ENCODE measurements at regions of chr3 and their contacts with region 1.

Region 1: DNA sequence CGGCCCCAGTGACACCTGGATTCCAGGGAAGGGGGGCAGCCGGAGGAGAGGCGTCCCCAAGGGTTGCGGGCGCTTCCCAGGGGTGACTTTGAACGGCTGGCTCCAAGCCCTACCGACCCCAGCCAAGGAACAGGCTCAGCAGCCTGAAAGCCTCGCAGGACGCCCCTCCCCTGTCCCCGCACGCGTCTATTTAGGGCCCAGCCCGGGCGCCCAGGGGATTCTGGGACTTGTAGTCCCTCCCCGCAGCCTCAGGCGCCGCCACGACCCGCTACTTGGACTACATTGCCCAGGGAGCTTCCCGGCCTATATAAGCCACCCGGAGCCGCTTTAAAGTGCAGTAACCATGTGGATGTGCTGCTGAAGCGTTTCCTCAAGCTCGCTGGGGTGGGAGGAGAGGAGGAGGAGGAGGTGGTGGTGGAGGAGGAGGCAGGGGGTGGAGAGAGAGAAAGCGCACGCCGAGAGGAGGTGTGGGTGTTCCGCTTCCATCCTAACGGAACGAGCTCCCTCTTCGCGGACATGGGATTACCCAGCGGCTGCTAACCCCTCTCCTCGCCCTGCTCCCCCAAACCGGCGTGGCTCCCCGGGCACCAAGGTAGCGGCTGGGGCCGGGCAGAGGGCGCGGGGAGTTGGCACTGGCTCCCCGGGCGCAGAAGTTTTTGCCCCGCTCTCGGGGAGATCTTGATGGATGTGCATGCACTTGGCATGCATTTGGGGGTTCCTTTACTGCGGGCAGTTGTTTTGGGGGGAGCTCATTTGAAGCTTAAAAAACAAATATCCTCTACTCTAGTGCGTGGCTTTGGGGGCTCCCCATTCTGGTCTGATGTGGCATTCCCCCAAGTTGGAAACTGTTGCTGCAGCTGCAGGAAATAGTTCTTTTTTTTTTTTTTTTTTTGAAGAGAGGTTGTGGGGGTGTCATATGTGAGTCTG is at the start of gene ITPR1:
- DNase-seq: peak; percentile 97
- H3K4me3 ChIP-seq: peak within 1 kb of the TSS; percentile 56 to 83 (median 78)
- H3K27ac ChIP-seq: peak within 1 kb of the TSS; percentile 64
- H3K4me1 ChIP-seq: peaks cover 23% of the 10 kb centered on the region
- H3K27me3 ChIP-seq: no peaks in the 10 kb centered on the region
- CTCF ChIP-seq: peak in 1 of 2 donors; percentile 0
- total RNA-seq, gene ITPR1: 15.6 to 33.2 TPM

Region 2: GRCh38 chr3:4350789-4351163 is 142.5 kb before region 1 on chr3:
- CTCF ChIA-PET with region 1: no interaction called
- dilution Hi-C with region 1: no loop called
- in situ Hi-C with region 1: no loop called
- intact Hi-C with region 1: loop called (anchors 2 kb)
- DNase-seq: peak; percentile 41
- H3K4me3 ChIP-seq: no peak overlapping the region
- H3K27ac ChIP-seq: no peak overlapping the region
- H3K4me1 ChIP-seq: no peaks in the 10 kb centered on the region
- H3K27me3 ChIP-seq: no peaks in the 10 kb centered on the region
- CTCF ChIP-seq: peak; percentile 71 to 75

Region 3: DNA sequence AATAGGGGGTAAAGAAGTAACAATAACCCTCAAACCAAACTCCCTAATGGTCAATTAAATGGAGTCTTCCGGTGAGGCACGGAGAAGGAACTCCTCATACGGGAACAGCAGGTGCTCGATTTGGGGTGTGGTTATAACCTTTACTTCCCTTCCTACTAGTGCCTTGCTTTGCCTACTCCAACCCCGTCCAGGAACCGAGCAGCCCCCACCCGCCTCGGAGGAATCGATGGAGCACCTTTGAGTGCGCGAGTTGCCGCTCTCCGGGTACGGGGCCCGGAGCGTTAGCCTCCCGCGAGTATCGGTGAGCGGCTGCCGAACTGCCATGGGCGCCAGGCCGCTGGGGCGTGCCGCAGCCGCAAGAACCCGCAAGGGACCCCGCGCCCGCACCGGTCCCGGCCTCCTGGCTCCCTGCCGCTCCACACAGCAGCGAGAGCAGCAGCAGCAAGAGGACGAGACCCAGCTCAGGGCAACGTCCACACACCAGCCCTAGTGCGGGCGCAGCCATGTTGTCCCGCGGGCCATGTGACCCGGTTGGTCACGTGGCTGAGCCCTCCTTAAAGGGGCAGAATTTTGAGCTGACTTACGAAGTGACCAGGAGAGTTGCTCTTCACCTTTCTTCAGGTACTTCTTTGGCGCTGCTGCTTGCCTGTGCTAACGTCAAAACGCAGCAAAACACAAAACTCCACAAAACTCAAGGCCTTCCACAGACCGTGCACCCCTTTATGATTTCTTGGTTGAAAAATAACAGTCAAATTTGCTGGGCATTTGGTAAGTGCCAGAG is 26.3 kb before region 1 on chr3 and contains the start of gene SUMF1:
- CTCF ChIA-PET with region 1: no interaction called
- dilution Hi-C with region 1: no loop called
- in situ Hi-C with region 1: no loop called
- intact Hi-C with region 1: loop called (anchors 2 kb)
- DNase-seq: peak; percentile 75
- H3K4me3 ChIP-seq: peak within 1 kb of the TSS; percentile 59 to 79 (median 62)
- H3K27ac ChIP-seq: peak within 1 kb of the TSS; percentile 80
- H3K4me1 ChIP-seq: peaks cover 3% of the 10 kb centered on the region
- H3K27me3 ChIP-seq: no peaks in the 10 kb centered on the region
- CTCF ChIP-seq: no peak
- total RNA-seq, gene SUMF1: 31.4 to 87.7 TPM

Region 4: GRCh38 chr3:4633078-4634004 is 140.1 kb after region 1 on chr3:
- CTCF ChIA-PET with region 1: no interaction called
- dilution Hi-C with region 1: no loop called
- in situ Hi-C with region 1: no loop called
- intact Hi-C with region 1: loop called (anchors 1 kb)
- DNase-seq: peak; percentile 35
- H3K4me3 ChIP-seq: no peak overlapping the region
- H3K27ac ChIP-seq: no peak overlapping the region
- H3K4me1 ChIP-seq: no peaks in the 10 kb centered on the region
- H3K27me3 ChIP-seq: no peaks in the 10 kb centered on the region
- CTCF ChIP-seq: peak; percentile 90 to 92

Measured in mammary epithelial cell (primary cell).